H1 (cell line): ENCODE measurements at regions of chr22 and their contacts with region 1.

Region 1: DNA sequence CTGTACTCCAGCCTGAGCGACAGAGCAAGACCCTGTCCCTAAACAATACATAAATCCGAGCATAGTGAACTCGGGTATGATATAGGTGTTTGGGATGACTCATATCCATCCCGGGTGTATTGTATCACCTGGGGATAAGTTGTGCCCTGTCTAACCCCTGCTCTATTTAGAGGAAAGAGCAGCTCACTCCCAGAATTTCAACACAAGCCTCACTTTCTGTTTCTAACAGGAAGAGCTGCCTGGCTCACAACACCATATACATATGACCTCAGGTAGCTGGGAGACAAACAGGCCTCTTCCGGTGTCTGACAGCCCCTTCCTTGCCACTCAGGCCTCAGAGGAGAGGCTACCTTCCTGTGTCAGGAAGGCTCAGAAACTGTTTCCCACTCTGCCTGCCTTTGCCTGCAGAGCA is 9.9 kb upstream of the MICALL1 start:
- DNase-seq: no peak
- H3K4me3 ChIP-seq: no peak overlapping the region
- H3K27ac ChIP-seq: no peak overlapping the region
- H3K4me1 ChIP-seq: peaks cover 16 to 24% (median 20%) of the 10 kb centered on the region in 4 experiments
- H3K27me3 ChIP-seq: no peaks in the 10 kb centered on the region
- CTCF ChIP-seq: no peak
- EP300 ChIP-seq: no peak
- POLR2A ChIP-seq: no peak
- RAD21 ChIP-seq: no peak

Region 2: DNA sequence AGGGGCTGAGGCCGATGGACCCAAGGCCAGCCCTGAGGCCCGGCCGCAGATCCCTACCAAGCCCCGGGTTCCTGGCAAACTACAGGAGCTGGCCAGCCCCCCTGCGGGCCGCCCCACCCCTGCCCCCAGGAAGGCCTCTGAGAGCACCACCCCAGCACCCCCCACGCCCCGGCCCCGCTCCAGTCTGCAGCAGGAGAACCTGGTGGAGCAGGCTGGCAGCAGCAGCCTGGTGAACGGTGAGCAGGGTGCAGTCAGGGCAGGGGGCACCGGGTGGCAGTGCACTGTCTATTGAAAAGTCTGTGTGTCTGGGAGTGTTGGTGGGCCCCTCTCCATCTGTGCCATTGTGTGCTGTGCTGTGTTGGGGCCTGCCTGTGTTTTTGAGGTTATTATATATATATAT is 26.0 kb after region 1 on chr22:
- CTCF ChIA-PET with region 1: interaction called, 158 read pairs
- POLR2A ChIA-PET with region 1: interaction called, 36 read pairs
- DNase-seq: no peak
- H3K4me3 ChIP-seq: no peak overlapping the region
- H3K27ac ChIP-seq: no peak overlapping the region
- H3K4me1 ChIP-seq: no peaks in the 10 kb centered on the region
- H3K27me3 ChIP-seq: no peaks in the 10 kb centered on the region
- CTCF ChIP-seq: peak in 1 of 3 experiments; percentile 29; a peak in 1 of 4 replicates
- EP300 ChIP-seq: no peak
- POLR2A ChIP-seq: no peak
- RAD21 ChIP-seq: no peak; a peak in 1 of 4 replicates